IMR-90 (cell line): ENCODE measurements at regions of chr1 and their contacts with region 1.

Region 1: DNA sequence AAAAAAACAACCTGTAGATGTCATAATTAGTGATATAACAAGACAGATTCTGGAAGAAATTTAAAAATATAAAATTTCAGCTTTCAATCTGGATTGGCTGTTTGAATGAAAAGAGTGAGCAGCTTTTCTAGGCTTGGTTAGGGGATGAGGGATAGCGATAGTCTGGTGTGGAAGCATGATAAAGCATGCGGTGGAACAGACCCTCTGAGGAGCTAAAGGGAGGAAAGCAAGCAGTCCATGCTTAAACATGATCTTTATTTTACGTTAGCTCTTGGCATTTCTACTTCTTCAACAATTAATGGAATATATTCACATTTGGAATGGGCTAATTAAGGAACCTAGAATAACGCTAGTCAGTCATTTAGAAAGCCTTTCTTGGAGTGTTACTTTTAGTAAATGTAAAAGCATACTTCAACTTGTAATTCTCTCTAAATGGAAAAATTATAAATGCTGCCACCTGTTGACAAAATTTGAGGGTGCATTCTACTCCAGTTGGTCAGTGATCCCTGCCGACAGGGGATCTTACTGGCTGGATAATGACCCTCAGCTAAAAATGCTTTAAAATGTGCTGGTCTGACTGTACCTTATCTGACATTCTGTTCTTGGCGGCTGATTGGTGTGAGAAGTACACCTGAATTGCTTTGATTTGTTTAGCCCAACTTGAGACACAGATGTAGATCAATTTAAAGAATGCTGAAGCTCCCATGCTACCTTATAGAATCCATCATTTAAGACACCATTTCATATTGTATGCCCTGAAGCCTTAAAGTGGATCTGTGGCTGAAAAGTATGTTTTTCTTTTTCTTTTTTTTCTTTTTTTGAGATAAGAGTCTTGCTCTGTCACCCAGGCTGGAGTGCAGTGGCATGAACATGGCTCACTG is 61.2 kb downstream of the AK4 start:
- DNase-seq: peak; percentile 47
- ATAC-seq: peak; percentile 81
- H3K4me3 ChIP-seq: no peak overlapping the region
- H3K27ac ChIP-seq: no peak overlapping the region
- H3K4me1 ChIP-seq: no peaks in the 10 kb centered on the region; the same call in 1 of the 2 replicates
- H3K27me3 ChIP-seq: no peaks in the 10 kb centered on the region
- CTCF ChIP-seq: peak; percentile 62
- POLR2A ChIP-seq: no peak
- RAD21 ChIP-seq: peak; percentile 47

Region 2: GRCh38 chr1:65221638-65222339 is 12.5 kb after region 1 on chr1:
- CTCF ChIA-PET with region 1: interaction called, 10 read pairs
- POLR2A ChIA-PET with region 1: no interaction called
- dilution Hi-C with region 1: no loop called
- in situ Hi-C with region 1: no loop called
- intact Hi-C with region 1: no loop called
- DNase-seq: no peak
- ATAC-seq: no peak
- H3K4me3 ChIP-seq: no peak overlapping the region
- H3K27ac ChIP-seq: no peak overlapping the region
- H3K4me1 ChIP-seq: no peaks in the 10 kb centered on the region
- H3K27me3 ChIP-seq: no peaks in the 10 kb centered on the region
- CTCF ChIP-seq: no peak
- POLR2A ChIP-seq: no peak
- RAD21 ChIP-seq: no peak